ENCODE measurements at regions of chr3 and their contacts with region 1.

Region 1: DNA sequence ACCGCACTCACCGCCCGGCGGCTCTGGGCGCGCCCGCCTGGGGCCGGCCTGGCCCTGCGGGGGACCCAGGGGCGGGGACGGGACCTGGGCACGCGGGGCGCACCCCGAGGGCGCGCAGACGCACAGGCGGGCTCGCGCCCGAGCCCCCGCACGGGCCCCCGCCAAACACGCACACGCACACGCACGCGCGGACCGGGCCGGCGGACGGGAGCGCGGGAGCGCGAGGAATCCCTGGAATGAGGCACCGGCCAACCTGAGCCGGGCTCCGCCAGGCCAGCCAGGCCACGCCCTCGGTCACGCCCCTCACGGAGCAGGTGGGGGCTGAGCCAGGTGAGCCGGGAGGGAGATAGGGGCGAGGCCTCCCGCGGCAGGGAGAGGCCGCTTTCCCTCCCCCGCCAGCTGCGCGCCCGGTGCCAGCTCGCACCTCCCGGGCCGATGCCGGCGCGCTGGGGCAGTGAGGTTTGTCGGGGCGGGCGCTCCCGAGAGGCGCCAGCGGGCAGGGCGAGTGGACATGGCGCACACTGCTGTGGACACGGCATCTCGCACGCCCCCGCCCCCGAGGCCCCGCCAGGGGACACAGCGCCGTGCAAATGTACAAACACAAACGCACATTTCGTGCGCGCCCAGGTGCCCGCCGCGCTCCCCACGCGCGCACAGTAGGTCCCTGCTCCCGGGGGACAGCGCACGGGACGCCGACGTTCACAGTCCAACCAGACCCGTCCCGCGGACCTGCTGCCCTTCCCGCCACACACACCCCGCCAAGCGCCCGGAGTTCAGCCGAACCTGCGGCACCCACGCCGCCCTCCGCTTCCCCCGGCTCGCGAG is 75.9 kb upstream of the VGLL4 start:
- DNase-seq: peak; percentile 65 to 85 (median 78)
- ATAC-seq: peak; percentile 49 to 84 (median 74)
- H3K4me3 ChIP-seq: peak overlapping the region; percentile 63 to 94 (median 84)
- H3K27ac ChIP-seq: peak overlapping the region; percentile 79 to 98 (median 92)
- H3K4me1 ChIP-seq: peaks cover 0 to 36% (median 20%) of the 10 kb centered on the region in 12 donors
- H3K27me3 ChIP-seq: no peaks in the 10 kb centered on the region
- CTCF ChIP-seq: no peak
- POLR2A ChIP-seq: no peak

Region 2: GRCh38 chr3:11379233-11379823 is 340.3 kb before region 1 on chr3:
- intact Hi-C with region 1: loop called in 1 of 10 experiments (anchors 5 kb)
- DNase-seq: no peak
- ATAC-seq: peak; percentile 26 to 72 (median 62)
- H3K4me3 ChIP-seq: no peak overlapping the region
- H3K27ac ChIP-seq: peak overlapping the region in 1 of 12 donors; percentile 15
- H3K4me1 ChIP-seq: peaks cover 0 to 18% (median 2%) of the 10 kb centered on the region in 12 donors
- H3K27me3 ChIP-seq: no peaks in the 10 kb centered on the region
- CTCF ChIP-seq: peak; percentile 36 to 82 (median 67)
- POLR2A ChIP-seq: no peak

Region 3: GRCh38 chr3:11430624-11431023 is 289.0 kb before region 1 on chr3:
- intact Hi-C with region 1: no loop called
- DNase-seq: no peak
- ATAC-seq: no peak
- H3K4me3 ChIP-seq: no peak overlapping the region
- H3K27ac ChIP-seq: no peak overlapping the region
- H3K4me1 ChIP-seq: peaks cover 0 to 32% (median 16%) of the 10 kb centered on the region in 12 donors
- H3K27me3 ChIP-seq: no peaks in the 10 kb centered on the region
- CTCF ChIP-seq: no peak
- POLR2A ChIP-seq: no peak

Region 4: DNA sequence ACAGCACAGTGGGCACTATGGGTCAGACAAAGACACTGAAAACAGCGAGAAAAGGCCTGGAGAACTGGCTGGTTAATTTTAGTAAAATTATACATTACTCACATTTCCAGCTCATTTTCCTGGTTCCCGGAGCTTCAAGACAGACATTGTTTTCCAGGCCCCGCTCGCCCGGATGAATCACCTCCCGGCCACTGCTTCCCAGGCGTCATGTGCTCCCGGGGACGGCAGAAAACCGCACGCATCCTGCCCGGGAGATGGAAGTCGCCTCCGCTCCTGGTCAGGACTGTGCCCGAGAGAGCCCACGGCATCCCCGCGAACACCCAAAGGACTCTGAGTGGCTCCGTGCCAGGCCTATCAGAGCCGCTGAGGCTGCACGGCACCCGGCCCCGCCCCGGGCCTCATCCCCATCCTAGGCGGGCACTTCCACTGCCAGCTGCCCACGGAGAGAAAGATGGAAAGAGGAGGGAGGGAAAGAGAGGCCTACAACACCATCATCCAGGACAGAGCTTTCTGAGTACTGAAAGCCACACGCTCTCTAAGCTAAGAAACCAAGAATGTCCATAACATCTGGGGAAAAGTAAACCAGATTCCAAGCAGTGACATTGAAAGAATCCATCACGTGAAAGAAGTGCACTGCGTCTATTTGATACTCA is 151.0 kb before region 1 on chr3:
- intact Hi-C with region 1: loop called in 1 of 10 experiments (anchors 10 kb)
- DNase-seq: peak; percentile 79 to 90 (median 81)
- ATAC-seq: peak; percentile 37 to 76 (median 68)
- H3K4me3 ChIP-seq: peak overlapping the region in 9 of 12 donors; percentile 22 to 48 (median 32)
- H3K27ac ChIP-seq: peak overlapping the region; percentile 18 to 96 (median 86)
- H3K4me1 ChIP-seq: peaks cover 9 to 82% (median 59%) of the 10 kb centered on the region in 12 donors
- H3K27me3 ChIP-seq: no peaks in the 10 kb centered on the region
- CTCF ChIP-seq: no peak
- POLR2A ChIP-seq: no peak

Region 5: GRCh38 chr3:11662402-11662990 is 57.1 kb before region 1 on chr3:
- intact Hi-C with region 1: loop called in 2 of 10 experiments (anchors 5 kb)
- DNase-seq: no peak
- ATAC-seq: peak in 1 of 4 donors; percentile 51
- H3K4me3 ChIP-seq: no peak overlapping the region
- H3K27ac ChIP-seq: no peak overlapping the region
- H3K4me1 ChIP-seq: peaks cover 0 to 32% (median 12%) of the 10 kb centered on the region in 12 donors
- H3K27me3 ChIP-seq: no peaks in the 10 kb centered on the region
- CTCF ChIP-seq: peak in 5 of 12 donors; percentile 15 to 38 (median 32)
- POLR2A ChIP-seq: no peak

Region 6: GRCh38 chr3:11671648-11672100 is 47.9 kb before region 1 on chr3:
- intact Hi-C with region 1: loop called in 1 of 10 experiments (anchors 5 kb)
- DNase-seq: peak in 4 of 5 donors; percentile 19 to 43 (median 32)
- ATAC-seq: peak in 3 of 4 donors; percentile 45 to 72 (median 63)
- H3K4me3 ChIP-seq: no peak overlapping the region
- H3K27ac ChIP-seq: no peak overlapping the region
- H3K4me1 ChIP-seq: peaks cover 0 to 29% (median 19%) of the 10 kb centered on the region in 12 donors
- H3K27me3 ChIP-seq: no peaks in the 10 kb centered on the region
- CTCF ChIP-seq: no peak
- POLR2A ChIP-seq: no peak

Region 7: DNA sequence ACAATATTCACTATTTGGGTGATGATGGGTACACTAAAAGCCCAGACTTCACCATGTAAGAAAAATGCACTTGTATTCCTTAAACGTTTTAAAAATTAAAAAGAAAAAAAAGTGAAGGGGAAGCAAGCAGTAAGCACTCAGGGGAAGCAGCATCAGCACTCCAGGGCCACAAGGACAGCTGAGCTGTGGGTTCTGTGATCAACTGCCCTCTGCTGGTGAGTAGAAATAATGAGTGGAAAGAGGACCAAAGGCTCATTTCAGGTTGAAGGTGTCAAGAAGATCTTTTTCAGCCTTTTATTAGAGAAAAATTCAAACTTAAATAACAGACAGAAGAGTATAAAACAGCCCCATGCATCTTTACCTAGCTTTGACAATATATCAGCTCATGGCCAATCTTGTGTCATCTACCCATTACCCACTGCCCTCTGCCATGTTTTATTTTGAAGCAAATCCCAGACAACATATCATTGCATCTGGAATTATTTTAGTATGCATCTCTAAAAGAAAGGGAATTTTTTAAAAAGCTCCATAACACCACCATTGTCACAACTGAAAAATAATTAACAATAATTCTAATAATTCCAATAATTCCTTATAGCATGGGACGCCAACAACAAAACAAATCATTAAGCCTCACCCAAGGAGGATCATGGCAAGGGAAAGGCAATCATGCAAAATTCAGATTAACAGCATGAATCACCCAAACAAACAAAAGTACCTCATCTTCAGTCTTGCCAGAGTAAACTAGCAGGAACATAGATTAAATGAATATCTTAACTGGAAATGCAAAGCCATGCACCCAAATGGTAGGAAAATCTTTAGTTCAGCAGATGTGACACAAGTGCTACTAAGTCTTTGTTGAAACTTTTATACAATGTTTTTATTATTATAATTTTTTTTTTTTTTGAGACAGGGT is 84.6 kb after region 1 on chr3:
- intact Hi-C with region 1: loop called in 2 of 10 experiments (anchors 5 kb)
- DNase-seq: peak in 3 of 5 donors; percentile 24 to 53 (median 25)
- ATAC-seq: peak in 3 of 4 donors; percentile 69 to 74 (median 72)
- H3K4me3 ChIP-seq: no peak overlapping the region
- H3K27ac ChIP-seq: no peak overlapping the region
- H3K4me1 ChIP-seq: no peaks in the 10 kb centered on the region
- H3K27me3 ChIP-seq: no peaks in the 10 kb centered on the region
- CTCF ChIP-seq: peak; percentile 62 to 81 (median 71)
- POLR2A ChIP-seq: no peak